ENCODE measurements at regions of chr7 and their contacts with region 1.

Region 1: GRCh38 chr7:18770154-18770811 is 274.7 kb downstream of the HDAC9 start:
- DNase-seq: no peak
- H3K4me3 ChIP-seq: no peak overlapping the region; a peak in 1 of 4 replicates
- H3K27ac ChIP-seq: peak overlapping the region; percentile 39 to 86; a peak in 3 of 4 replicates
- H3K4me1 ChIP-seq: peaks cover 12 to 29% of the 10 kb centered on the region in 2 experiments
- H3K27me3 ChIP-seq: no peaks in the 10 kb centered on the region
- CTCF ChIP-seq: no peak
- EP300 ChIP-seq: peak in 1 of 2 experiments; percentile 92; a peak in 2 of 4 replicates
- RAD21 ChIP-seq: no peak

Region 2: GRCh38 chr7:18780938-18781337 is 10.7 kb after region 1 on chr7:
- CTCF ChIA-PET with region 1: interaction called, 11 read pairs
- POLR2A ChIA-PET with region 1: no interaction called
- DNase-seq: no peak
- H3K4me3 ChIP-seq: no peak overlapping the region
- H3K27ac ChIP-seq: peak overlapping the region in 1 of 2 experiments; percentile 94; a peak in 2 of 4 replicates
- H3K4me1 ChIP-seq: peaks cover 0 to 20% of the 10 kb centered on the region in 2 experiments; a peak in 2 of 4 replicates
- H3K27me3 ChIP-seq: no peaks in the 10 kb centered on the region
- CTCF ChIP-seq: no peak
- EP300 ChIP-seq: no peak
- RAD21 ChIP-seq: no peak